Common myeloid progenitor, CD34-positive (primary cell): ENCODE measurements at regions of chr6 and their contacts with region 1.

Region 1: GRCh38 chr6:43297644-43298564 is at the start of gene SLC22A7:
- DNase-seq: no peak
- H3K4me3 ChIP-seq: no peak within 1 kb of the TSS
- H3K27ac ChIP-seq: no peak within 1 kb of the TSS
- H3K4me1 ChIP-seq: no peaks in the 10 kb centered on the region
- H3K27me3 ChIP-seq: peaks cover 0 to 14% (median 2%) of the 10 kb centered on the region in 5 experiments

Region 2: GRCh38 chr6:43286980-43287716 is 10.8 kb before region 1 on chr6:
- CTCF ChIA-PET with region 1: interaction called, 13 read pairs
- POLR2A ChIA-PET with region 1: no interaction called
- DNase-seq: no peak
- H3K4me3 ChIP-seq: no peak overlapping the region
- H3K27ac ChIP-seq: no peak overlapping the region
- H3K4me1 ChIP-seq: peaks cover 0 to 7% (median 4%) of the 10 kb centered on the region in 4 experiments
- H3K27me3 ChIP-seq: peaks cover 0 to 56% (median 9%) of the 10 kb centered on the region in 5 experiments

Region 3: DNA sequence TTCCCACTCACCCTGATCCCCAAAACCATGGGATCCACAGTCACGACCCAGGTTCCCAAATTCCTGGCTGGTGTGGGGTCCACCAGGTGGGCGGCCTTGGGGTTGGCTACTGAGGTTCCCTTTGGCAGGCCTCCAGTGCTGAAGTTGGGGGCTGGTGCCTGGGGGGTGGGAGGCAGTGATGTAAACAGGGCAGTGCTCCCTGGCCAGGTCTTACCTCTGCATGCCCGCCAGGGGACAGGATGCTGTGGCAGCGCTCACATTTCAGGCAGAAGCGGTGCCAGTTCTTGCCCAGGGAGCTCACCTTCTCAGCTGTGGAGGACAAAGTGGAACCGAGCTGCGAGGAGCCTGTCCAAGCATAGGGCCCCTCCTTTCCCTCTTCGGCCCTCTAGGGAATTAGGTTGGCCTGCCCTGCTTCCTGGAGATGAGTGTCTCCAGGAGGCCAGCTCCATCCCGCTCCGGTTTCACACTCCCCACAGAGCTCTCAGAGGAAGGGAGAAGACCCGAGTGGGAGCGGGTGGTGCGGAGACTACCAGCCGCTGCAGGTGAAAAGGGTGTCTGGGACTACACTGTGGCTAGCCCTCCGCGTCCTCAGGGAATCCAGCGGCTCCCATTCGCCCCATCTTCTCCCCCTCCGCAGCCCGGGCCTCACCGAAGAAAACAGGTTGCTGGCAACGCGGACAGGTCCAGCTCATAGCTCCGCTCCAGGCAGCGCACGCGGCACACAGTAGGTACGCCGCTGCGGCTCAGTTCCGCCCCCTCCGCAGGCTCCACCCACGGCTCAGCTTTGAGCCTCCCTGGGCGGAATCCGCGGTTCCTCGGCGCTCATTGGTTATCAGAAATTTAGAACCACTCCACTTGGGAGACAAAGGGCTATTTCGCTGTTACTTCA is 10.4 kb after region 1 on chr6 and contains the start of gene CRIP3:
- CTCF ChIA-PET with region 1: interaction called, 13 read pairs
- POLR2A ChIA-PET with region 1: no interaction called
- DNase-seq: peak; percentile 61 to 79 (median 73)
- H3K4me3 ChIP-seq: peak within 1 kb of the TSS; percentile 10 to 74 (median 32)
- H3K27ac ChIP-seq: no peak within 1 kb of the TSS
- H3K4me1 ChIP-seq: peaks cover 22 to 43% (median 26%) of the 10 kb centered on the region in 4 experiments
- H3K27me3 ChIP-seq: peaks cover 0 to 8% (median 0%) of the 10 kb centered on the region in 5 experiments

Region 4: GRCh38 chr6:43347021-43347420 is 49.1 kb after region 1 on chr6:
- CTCF ChIA-PET with region 1: no interaction called
- POLR2A ChIA-PET with region 1: no interaction called
- DNase-seq: no peak
- H3K4me3 ChIP-seq: no peak overlapping the region
- H3K27ac ChIP-seq: no peak overlapping the region
- H3K4me1 ChIP-seq: no peaks in the 10 kb centered on the region
- H3K27me3 ChIP-seq: no peaks in the 10 kb centered on the region